Stomach (tissue), 19 donors: ENCODE measurements at regions of chr7 and their contacts with region 1.

Region 1: DNA sequence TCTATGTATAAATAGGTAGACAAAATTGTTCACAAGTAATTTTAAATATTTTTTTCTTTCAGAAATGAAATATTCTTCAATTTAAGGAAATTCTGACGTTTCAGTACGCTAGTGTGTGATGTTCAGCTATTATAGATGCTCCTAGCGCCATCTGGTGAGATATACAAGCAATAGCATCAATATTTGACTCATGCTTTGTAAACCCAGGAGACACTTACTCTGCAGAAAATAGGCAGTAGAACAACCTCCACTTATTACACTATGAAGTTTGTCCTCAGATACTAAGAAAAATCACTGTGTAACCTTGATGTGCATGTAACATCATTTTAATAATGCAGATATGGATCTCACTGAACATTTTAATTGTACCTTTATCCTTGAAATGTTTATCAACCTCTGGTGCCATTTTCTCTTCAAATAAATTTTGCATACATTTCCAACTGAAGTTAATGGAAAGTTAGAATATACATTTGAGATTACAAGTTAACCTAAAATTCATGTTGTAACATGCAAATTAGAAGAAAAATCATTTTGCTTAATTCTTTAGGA is 151.5 kb upstream of the FAM3C start:
- DNase-seq: peak in 1 of 2 donors; percentile 84
- H3K4me3 ChIP-seq: no peak overlapping the region
- H3K27ac ChIP-seq: no peak overlapping the region
- H3K4me1 ChIP-seq: peaks cover 0 to 17% (median 3%) of the 10 kb centered on the region in 4 donors
- H3K27me3 ChIP-seq: no peaks in the 10 kb centered on the region
- CTCF ChIP-seq: peak in 5 of 7 experiments; percentile 28 to 76 (median 63)
- EP300 ChIP-seq: no peak
- POLR2A ChIP-seq: no peak

Region 2: GRCh38 chr7:121366852-121367431 is 180.7 kb before region 1 on chr7:
- intact Hi-C with region 1: loop called (anchors 2 kb)
- DNase-seq: peak in 1 of 2 donors; percentile 72
- H3K4me3 ChIP-seq: no peak overlapping the region
- H3K27ac ChIP-seq: no peak overlapping the region
- H3K4me1 ChIP-seq: peaks cover 0 to 25% (median 16%) of the 10 kb centered on the region in 4 donors
- H3K27me3 ChIP-seq: no peaks in the 10 kb centered on the region
- CTCF ChIP-seq: peak in 5 of 7 experiments; percentile 49 to 76 (median 60)
- EP300 ChIP-seq: no peak
- POLR2A ChIP-seq: no peak

Region 3: DNA sequence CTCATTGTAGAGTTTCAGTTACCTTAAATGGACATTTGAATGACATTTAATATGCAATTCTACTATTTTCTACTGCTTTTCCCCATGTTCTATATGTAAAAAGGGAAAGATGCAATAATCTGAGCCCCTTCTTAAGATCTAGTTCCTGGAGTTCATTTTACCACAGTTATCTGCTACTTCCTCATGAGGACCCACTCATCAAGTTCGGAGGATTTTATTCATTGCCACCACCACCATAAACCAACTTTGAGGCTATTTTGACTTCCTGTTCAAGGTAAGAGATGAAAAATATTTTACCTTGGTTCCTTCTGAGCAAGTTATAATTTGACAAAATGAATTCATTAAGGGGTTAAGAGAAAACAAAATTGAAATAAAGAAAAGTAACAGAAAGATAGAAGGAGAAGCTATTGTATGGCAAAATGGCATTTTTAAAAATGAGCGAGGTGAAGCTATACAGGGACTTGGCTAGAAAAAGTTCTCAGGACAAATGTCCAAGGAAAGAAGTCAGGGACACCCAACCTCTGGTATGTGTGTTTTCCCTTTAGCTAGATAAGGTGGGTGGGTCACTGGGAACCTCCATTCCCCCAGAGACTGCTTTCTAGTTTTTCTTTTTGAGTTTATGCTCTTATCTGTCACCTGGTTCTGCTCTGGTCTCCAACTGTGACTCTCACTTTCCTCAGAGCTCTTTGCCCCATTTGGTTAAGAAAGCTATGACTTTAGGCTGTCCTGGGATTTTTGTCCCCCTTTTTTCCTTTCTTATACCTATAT is 136.6 kb before region 1 on chr7:
- intact Hi-C with region 1: no loop called
- DNase-seq: no peak
- H3K4me3 ChIP-seq: no peak overlapping the region
- H3K27ac ChIP-seq: no peak overlapping the region
- H3K4me1 ChIP-seq: no peaks in the 10 kb centered on the region
- H3K27me3 ChIP-seq: no peaks in the 10 kb centered on the region
- CTCF ChIP-seq: no peak
- EP300 ChIP-seq: no peak
- POLR2A ChIP-seq: no peak

Region 4: GRCh38 chr7:121442845-121443244 is 104.8 kb before region 1 on chr7:
- intact Hi-C with region 1: no loop called
- DNase-seq: no peak
- H3K4me3 ChIP-seq: no peak overlapping the region
- H3K27ac ChIP-seq: no peak overlapping the region
- H3K4me1 ChIP-seq: peaks cover 0 to 10% (median 6%) of the 10 kb centered on the region in 4 donors
- H3K27me3 ChIP-seq: no peaks in the 10 kb centered on the region
- CTCF ChIP-seq: no peak
- EP300 ChIP-seq: no peak
- POLR2A ChIP-seq: no peak